Tibial artery (tissue), 4 donors: ENCODE measurements at regions of chr3 and their contacts with region 1.

Region 1: GRCh38 chr3:30693470-30694120 is 87.2 kb downstream of the TGFBR2 start:
- DNase-seq: no peak
- H3K4me3 ChIP-seq: no peak overlapping the region
- H3K27ac ChIP-seq: peak overlapping the region in 1 of 2 donors; percentile 77
- H3K4me1 ChIP-seq: peaks cover 0 to 70% (median 41%) of the 10 kb centered on the region in 4 donors
- H3K27me3 ChIP-seq: no peaks in the 10 kb centered on the region
- CTCF ChIP-seq: peak; percentile 74 to 92

Region 2: DNA sequence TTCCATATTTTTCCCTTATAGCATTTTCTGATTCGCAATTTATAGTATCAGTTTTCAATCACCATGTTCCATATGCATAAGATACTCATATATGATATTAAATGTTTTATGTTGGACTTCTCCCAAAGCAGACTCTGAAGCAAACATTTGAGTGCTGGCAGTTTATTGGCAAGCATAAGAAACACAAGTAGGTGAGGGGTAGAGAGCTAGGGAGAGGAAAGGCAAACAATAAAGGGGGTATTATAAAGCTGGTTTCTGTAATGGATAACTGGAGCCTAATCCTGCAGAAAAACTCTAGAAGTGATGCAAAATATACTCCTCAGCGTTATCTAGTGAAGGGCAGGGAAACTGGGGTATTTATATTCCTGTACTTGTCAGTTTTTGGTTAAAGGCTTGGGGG is 578.7 kb before region 1 on chr3:
- intact Hi-C with region 1: loop called (anchors 5 kb)
- DNase-seq: no peak
- H3K4me3 ChIP-seq: no peak overlapping the region
- H3K27ac ChIP-seq: no peak overlapping the region
- H3K4me1 ChIP-seq: peaks cover 0 to 10% (median 2%) of the 10 kb centered on the region in 4 donors
- H3K27me3 ChIP-seq: no peaks in the 10 kb centered on the region
- CTCF ChIP-seq: no peak